ENCODE measurements at regions of chr2 and their contacts with region 1.

Region 1: GRCh38 chr2:27303093-27304025 is 4.9 kb downstream of the UCN start:
- DNase-seq: peak; percentile 57
- ATAC-seq: peak; percentile 63
- H3K4me3 Mint-ChIP-seq: peak overlapping the region; percentile 54
- H3K27ac Mint-ChIP-seq: peak overlapping the region; percentile 28
- H3K4me1 Mint-ChIP-seq: peaks cover 8% of the 10 kb centered on the region
- H3K27me3 Mint-ChIP-seq: peaks cover 24% of the 10 kb centered on the region

Region 2: GRCh38 chr2:27095745-27096651 is 207.4 kb before region 1 on chr2:
- CTCF ChIA-PET with region 1: interaction called, 11 read pairs
- DNase-seq: peak; percentile 65
- ATAC-seq: peak; percentile 88
- H3K4me3 Mint-ChIP-seq: no peak overlapping the region
- H3K27ac Mint-ChIP-seq: no peak overlapping the region
- H3K4me1 Mint-ChIP-seq: peaks cover 7% of the 10 kb centered on the region
- H3K27me3 Mint-ChIP-seq: no peaks in the 10 kb centered on the region

Region 3: GRCh38 chr2:27264753-27265535 is 38.4 kb before region 1 on chr2:
- CTCF ChIA-PET with region 1: interaction called, 12 read pairs
- DNase-seq: peak; percentile 57
- ATAC-seq: peak; percentile 14
- H3K4me3 Mint-ChIP-seq: peak overlapping the region; percentile 19
- H3K27ac Mint-ChIP-seq: no peak overlapping the region
- H3K4me1 Mint-ChIP-seq: peaks cover 22% of the 10 kb centered on the region
- H3K27me3 Mint-ChIP-seq: peaks cover 45% of the 10 kb centered on the region

Region 4: DNA sequence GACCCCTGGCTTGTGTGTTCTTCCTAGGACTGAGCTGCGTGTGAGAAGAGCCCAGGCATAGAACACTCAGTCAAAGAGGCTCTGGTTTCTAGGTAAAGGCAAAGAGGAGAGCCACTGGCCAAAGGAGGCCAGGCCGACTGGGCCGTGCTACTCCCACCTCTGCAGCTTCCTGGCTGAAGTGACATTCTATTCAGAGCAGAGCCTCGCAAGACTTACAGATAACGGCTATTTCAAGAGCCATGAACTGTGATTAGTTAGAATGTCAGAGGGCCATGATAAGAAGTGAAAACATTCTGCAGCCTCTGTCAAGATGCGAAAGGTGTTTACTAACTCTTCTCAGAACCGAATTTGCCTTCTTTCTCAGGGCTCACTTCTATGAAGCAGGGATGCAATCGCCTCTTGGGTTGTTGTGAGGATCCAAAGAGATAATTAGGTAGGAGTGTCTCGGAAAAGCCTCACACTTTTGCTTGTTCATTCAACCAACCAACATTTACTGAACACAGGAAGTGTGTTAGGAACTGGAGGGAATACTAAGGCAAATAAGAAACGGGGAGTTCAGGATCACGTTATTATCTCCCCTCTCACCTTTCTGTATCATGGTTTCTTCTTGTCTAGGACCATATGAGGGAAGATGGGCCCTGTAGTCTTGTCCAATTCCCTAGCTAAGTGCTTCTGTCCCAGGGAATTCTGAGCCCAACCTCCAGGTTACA is 31.6 kb before region 1 on chr2:
- CTCF ChIA-PET with region 1: interaction called, 12 read pairs
- DNase-seq: no peak
- ATAC-seq: no peak
- H3K4me3 Mint-ChIP-seq: no peak overlapping the region
- H3K27ac Mint-ChIP-seq: no peak overlapping the region
- H3K4me1 Mint-ChIP-seq: peaks cover 4% of the 10 kb centered on the region
- H3K27me3 Mint-ChIP-seq: peaks cover 20% of the 10 kb centered on the region

Region 5: GRCh38 chr2:27291865-27292264 is 11.5 kb before region 1 on chr2:
- CTCF ChIA-PET with region 1: interaction called, 35 read pairs
- DNase-seq: no peak
- ATAC-seq: no peak
- H3K4me3 Mint-ChIP-seq: no peak overlapping the region
- H3K27ac Mint-ChIP-seq: no peak overlapping the region
- H3K4me1 Mint-ChIP-seq: peaks cover 2% of the 10 kb centered on the region
- H3K27me3 Mint-ChIP-seq: peaks cover 54% of the 10 kb centered on the region

Region 6: DNA sequence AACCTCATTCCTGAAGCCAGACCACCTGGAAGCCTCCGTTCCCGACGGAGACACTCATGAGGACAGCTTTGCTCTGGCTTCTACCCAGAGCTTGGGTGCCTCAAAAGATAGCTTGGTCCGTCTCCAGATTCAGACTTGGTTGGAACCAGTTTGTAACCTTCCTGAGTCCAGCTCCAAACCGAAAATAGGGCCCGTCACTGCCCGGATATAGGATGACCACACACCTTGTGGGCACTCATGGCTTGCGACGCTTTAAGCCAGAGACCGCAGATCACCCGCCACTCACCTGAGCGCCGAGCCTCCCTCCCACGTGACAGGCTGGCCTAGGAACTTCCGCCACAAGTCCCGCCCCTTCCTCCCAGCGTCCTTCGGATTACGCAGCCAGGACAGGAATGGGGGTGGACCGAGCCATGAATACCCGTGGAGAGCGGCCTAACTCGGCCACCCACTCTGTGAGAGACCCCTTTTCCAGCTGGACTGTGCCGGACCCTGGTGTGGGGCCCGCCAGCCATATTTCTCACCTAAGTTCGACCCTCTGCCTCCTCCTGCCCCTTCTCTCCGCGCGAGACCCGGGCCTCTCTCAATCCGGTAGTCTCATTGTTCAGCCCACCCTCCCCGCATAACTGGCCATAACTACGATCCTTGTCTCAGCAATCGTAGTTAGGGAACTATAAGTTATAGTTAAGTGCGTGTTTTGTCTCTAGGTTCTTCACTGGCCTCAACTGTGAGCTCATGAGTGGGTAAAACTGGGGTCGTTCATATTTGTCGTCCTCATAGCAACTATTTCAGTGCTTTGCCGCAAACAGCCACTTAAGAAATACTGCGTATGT is 19.6 kb after region 1 on chr2 and contains the start of gene MPV17:
- CTCF ChIA-PET with region 1: interaction called, 19 read pairs
- DNase-seq: peak; percentile 93
- ATAC-seq: peak; percentile 97
- H3K4me3 Mint-ChIP-seq: peak within 1 kb of the TSS; percentile 92
- H3K27ac Mint-ChIP-seq: peak within 1 kb of the TSS; percentile 92
- H3K4me1 Mint-ChIP-seq: peaks cover 19% of the 10 kb centered on the region
- H3K27me3 Mint-ChIP-seq: no peaks in the 10 kb centered on the region
- total RNA-seq, gene MPV17: 87.4 to 97.6 TPM

Region 7: DNA sequence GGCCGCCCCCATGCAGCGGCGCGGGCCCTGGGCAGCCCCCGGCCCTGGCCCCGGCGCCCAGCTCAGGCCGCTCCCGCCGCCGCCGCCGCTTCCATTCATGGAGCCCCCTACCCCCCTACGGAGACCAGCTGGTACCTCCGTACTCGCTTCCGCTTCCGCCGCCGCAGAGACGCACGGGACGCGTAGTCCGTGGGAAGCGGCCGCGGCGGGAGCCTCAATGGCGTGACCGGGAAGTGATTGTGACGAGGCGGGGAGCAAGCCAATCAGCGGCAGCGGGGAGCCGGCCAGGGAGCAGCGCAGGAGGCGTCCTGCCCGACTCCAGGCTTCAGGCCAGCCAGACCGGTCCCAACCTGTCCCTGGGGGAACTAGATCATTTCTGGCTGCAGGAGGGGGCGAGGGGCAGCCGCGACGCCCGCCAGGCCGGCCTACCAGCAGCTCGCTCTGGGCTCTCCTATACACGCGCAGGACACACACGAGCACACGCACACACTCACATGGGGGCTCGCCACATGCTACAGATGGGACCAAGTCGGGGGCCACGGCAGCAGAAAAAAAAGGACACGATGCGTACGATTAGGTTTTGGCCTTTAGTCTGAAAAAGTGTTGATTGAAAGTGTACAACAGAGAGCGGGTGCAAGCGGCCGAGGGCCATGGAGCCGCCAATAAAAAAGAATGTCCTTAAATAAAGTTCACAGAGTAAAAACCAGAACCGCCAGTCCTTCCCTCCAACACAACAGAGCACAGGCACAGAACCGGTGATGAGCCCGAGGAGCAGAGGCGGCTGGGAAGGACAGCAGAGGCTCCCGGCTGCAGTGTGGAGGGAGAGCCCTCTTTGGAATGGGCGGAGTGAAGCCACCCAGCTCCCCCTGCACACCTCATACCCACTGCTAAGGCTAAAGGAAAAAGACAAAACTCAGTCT is 77.5 kb after region 1 on chr2 and contains the start of gene ZNF513:
- CTCF ChIA-PET with region 1: no interaction called
- DNase-seq: peak; percentile 93
- ATAC-seq: peak; percentile 91
- H3K4me3 Mint-ChIP-seq: peak within 1 kb of the TSS; percentile 84
- H3K27ac Mint-ChIP-seq: peak within 1 kb of the TSS; percentile 96
- H3K4me1 Mint-ChIP-seq: peaks cover 21% of the 10 kb centered on the region
- H3K27me3 Mint-ChIP-seq: no peaks in the 10 kb centered on the region
- total RNA-seq, gene ZNF513: 12.7 to 15.4 TPM